Right ventricle myocardium superior (tissue), 1 donor: ENCODE measurements at regions of chr3 and their contacts with region 1.

Region 1: GRCh38 chr3:132256989-132257388 is 60.2 kb upstream of the ACP3 start:
- DNase-seq: no peak
- ATAC-seq: peak; percentile 34

Region 2: DNA sequence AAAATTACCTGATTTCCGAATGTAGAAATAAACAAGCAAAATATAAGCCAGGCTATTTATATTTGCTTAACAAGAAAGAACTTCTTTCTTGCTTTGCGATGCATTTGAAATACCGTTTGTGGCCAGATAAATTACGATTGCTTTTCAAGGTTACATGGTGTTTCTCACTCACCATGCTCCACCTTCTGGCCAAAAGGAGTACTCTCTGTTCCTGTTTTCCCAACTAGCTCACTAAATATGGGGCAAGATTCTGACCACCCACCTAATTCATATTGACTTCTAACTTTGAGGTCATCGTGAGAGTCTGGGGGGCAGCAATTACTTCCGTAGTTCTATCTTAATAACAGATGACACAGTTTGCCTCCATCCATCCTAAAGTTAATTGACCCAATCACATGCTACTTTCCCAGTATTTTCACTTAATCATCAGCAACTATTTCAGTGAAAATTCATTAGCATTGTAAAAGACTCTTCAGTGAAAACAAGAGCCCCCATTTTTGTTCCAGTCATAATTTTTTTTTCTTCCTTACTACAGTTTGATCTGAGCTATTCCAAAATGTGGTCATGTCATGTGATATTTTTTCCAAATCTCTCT is 86.1 kb after region 1 on chr3:
- intact Hi-C with region 1: loop called (anchors 5 kb)
- DNase-seq: no peak
- ATAC-seq: peak; percentile 86

Region 3: DNA sequence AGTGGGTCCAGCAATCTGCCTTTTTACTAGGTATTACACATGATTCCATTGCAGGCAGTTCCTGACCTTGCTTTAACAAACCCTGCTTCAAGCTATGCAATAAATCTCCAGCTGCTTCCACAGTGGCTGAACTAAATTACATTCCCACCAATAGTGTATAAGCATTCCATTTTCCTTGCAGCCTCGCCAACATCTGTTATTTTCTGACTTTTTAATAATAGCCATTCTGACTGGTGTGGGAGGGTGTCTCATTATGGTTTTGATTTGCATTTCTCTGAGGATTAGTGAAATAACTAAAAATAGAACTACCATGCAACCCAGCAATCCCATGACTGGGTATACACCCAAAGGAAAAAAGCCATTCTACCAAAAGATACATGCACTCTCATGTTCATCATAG is 123.9 kb after region 1 on chr3:
- intact Hi-C with region 1: no loop called
- DNase-seq: no peak
- ATAC-seq: no peak

Region 4: GRCh38 chr3:132399054-132399929 is 142.3 kb after region 1 on chr3:
- intact Hi-C with region 1: loop called (anchors 5 kb)
- DNase-seq: no peak
- ATAC-seq: peak; percentile 60

Region 5: GRCh38 chr3:132507657-132508056 is 250.7 kb after region 1 on chr3:
- intact Hi-C with region 1: no loop called
- DNase-seq: no peak
- ATAC-seq: no peak

Region 6: GRCh38 chr3:132911736-132912414 is 654.9 kb after region 1 on chr3:
- intact Hi-C with region 1: no loop called
- DNase-seq: no peak
- ATAC-seq: peak; percentile 73